Lower leg skin (tissue), 4 donors: ENCODE measurements at regions of chr20 and their contacts with region 1.

Region 1: GRCh38 chr20:55166063-55166462 is 690.7 kb downstream of the DOK5 start:
- DNase-seq: no peak
- H3K4me3 ChIP-seq: no peak overlapping the region
- CTCF ChIP-seq: no peak
- POLR2A ChIP-seq: no peak

Region 2: GRCh38 chr20:55342822-55343221 is 176.8 kb after region 1 on chr20:
- intact Hi-C with region 1: no loop called
- DNase-seq: no peak
- H3K4me3 ChIP-seq: no peak overlapping the region
- CTCF ChIP-seq: no peak
- POLR2A ChIP-seq: no peak

Region 3: DNA sequence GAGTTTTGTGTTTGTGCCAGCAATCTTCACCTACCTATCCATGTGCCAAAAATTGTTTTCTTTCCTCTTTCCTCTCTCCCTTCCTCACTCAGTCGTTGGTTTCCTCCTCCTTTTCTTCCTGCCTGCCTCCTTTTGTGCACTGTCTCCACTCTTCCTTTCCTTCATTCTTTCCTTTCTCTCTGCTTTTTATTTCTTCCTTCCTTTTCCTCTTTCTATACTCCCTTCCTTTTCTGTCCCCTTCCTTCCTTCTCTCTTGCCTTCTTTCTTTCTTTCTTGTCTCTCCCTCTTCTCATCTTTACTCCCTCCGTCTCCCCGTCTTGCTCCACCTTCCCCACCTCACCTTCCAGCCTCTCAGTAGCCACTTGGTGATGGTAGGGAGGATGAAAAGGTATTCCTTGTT is 438.3 kb after region 1 on chr20:
- intact Hi-C with region 1: loop called (anchors 5 kb)
- DNase-seq: no peak
- H3K4me3 ChIP-seq: no peak overlapping the region
- CTCF ChIP-seq: no peak
- POLR2A ChIP-seq: no peak